ENCODE measurements at regions of chr3 and their contacts with region 1.

Region 1: DNA sequence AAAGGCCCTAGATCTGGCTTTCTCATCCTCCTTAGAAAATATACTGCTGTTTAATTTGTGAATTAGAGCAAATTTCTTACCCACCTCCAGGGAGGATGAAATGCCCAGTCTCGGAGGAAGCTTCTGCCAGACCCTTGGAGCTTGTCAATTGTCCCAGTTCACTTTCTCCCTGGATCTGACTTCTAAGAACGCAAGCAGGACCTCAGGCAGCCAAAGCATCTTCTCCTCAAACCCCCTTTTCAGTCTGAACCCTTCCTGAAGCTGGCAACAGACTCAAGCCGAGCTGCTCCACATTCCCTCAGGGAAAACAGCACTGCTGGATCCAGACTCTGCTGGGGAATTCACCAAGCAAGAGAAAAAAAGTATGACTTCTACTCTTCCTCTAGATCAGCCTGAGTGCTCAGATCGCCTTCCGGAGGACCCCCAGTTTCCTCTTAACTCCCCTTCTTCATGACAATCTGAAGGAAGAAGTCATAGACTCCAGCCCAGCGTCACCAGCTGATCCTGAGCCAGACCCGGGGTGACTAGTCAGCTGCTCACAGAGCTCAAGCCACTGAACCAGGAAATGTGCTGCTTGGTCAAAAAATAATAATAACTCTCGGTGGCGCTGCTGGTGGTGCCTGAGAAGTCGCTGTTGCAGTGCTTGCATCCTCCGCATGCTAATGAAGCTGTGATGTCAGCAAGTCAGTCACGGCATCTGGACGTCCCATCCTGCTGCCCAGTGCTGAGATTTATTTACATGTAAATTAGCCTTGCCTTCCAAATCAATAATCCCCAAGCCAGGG is at the start of gene PRICKLE2:
- DNase-seq: peak; percentile 70 to 94
- H3K4me3 ChIP-seq: peak within 1 kb of the TSS; percentile 48 to 66
- H3K27ac ChIP-seq: peak within 1 kb of the TSS; percentile 92
- H3K4me1 ChIP-seq: peaks cover 9 to 44% of the 10 kb centered on the region in 2 donors
- H3K27me3 ChIP-seq: no peaks in the 10 kb centered on the region
- CTCF ChIP-seq: peak; percentile 27 to 45 (median 34)
- total RNA-seq, gene PRICKLE2: 24.7 TPM

Region 2: DNA sequence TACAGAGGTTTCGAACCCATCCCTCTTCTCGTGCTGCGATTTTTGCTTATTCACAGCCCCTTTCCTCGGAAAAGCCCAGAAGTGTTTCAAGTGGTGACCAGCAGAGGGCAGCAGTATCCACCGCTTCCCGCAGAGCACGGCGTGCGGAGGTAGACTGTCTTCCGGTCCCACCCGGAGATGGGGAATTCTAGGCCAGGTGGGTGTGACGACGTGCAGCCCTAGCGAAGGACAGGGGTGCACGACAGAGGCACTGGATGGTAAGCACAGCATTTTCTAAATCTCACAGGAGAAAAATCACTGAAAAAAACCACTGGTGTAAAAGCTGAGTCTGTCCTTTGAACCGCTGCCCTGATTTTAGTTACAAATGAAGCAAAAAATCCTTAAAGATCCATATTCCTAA is 194.3 kb before region 1 on chr3:
- intact Hi-C with region 1: loop called (anchors 5 kb)
- DNase-seq: peak in 1 of 2 donors; percentile 76
- H3K4me3 ChIP-seq: peak overlapping the region; percentile 41 to 53
- H3K27ac ChIP-seq: no peak overlapping the region
- H3K4me1 ChIP-seq: no peaks in the 10 kb centered on the region
- H3K27me3 ChIP-seq: no peaks in the 10 kb centered on the region
- CTCF ChIP-seq: peak; percentile 86 to 91 (median 87)

Region 3: DNA sequence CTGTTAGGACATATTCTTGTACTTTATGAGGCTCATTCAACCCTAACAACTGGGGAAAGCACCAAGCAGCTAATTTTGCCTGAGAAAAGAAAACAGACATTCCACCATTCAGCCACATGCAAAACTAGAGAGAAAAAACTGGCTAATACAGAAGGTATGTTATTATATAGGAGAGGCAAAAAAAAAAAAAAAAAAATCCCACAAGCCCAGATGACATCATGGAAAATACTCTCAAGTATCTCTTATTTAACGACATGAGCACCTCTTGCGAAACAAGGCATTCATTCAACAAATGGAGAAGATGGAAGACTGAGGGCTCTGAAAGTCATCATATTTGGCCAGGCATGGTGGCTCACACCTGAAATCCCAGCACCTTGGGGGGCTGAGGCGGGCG is 61.3 kb before region 1 on chr3:
- intact Hi-C with region 1: loop called (anchors 5 kb)
- DNase-seq: no peak
- H3K4me3 ChIP-seq: no peak overlapping the region
- H3K27ac ChIP-seq: no peak overlapping the region
- H3K4me1 ChIP-seq: peaks cover 0 to 40% of the 10 kb centered on the region in 2 donors
- H3K27me3 ChIP-seq: no peaks in the 10 kb centered on the region
- CTCF ChIP-seq: no peak

Region 4: GRCh38 chr3:64187065-64187959 is 37.7 kb before region 1 on chr3:
- intact Hi-C with region 1: loop called (anchors 2 kb)
- DNase-seq: peak; percentile 35 to 80
- H3K4me3 ChIP-seq: no peak overlapping the region
- H3K27ac ChIP-seq: peak overlapping the region; percentile 50 to 76
- H3K4me1 ChIP-seq: peaks cover 10 to 43% of the 10 kb centered on the region in 2 donors
- H3K27me3 ChIP-seq: no peaks in the 10 kb centered on the region
- CTCF ChIP-seq: no peak

Region 5: GRCh38 chr3:64209866-64210621 is 15.0 kb before region 1 on chr3:
- intact Hi-C with region 1: loop called (anchors 1 kb)
- DNase-seq: peak; percentile 40 to 90
- H3K4me3 ChIP-seq: no peak overlapping the region
- H3K27ac ChIP-seq: peak overlapping the region; percentile 78 to 79
- H3K4me1 ChIP-seq: peaks cover 0 to 37% of the 10 kb centered on the region in 2 donors
- H3K27me3 ChIP-seq: no peaks in the 10 kb centered on the region
- CTCF ChIP-seq: no peak

Region 6: DNA sequence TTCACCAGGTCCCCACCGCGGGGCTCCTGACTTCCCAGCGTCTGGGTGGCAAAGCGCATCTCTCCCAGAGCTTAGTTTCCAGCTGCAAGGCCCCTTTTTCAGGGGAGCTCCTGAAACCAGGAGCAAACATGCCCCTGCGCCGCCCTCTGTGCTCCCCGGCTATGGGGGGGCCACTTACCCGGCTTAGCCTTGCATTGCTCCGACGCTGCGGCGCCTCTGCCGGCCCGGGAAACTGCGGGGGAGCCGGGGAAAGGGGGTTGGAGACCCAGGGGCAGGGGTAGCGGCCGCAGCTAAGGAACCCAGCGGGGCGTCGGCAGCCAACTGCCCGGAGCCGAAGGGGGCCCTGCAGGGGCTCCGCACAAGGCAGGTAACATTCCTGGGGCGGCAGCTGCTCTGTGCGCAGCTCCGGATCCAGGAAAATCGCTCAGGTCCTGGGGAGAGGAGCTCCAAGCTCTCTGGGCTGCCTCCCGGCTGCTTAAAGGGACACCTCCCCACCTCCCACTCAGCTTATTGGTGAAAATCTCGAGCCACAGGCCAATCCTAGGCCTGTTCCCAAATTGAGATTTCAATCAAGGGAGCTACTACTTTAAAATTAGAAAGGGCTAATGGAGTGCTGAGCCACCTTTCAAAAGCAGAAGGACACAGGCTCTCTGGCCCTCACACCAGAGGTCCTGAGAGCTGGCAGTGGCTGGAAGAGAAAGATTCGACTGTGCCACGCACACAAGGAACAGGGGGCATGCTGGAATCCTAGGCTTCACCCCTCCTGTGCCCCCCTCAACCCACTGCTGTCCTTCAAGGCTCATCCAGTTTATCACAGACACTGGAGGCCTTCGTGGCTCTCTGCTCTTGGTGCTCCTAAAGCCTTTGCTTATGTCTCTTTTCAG is 42.9 kb after region 1 on chr3:
- intact Hi-C with region 1: loop called (anchors 2 kb)
- DNase-seq: peak in 1 of 2 donors; percentile 86
- H3K4me3 ChIP-seq: peak overlapping the region; percentile 63 to 75
- H3K27ac ChIP-seq: peak overlapping the region; percentile 81 to 85
- H3K4me1 ChIP-seq: peaks cover 6 to 13% of the 10 kb centered on the region in 2 donors
- H3K27me3 ChIP-seq: no peaks in the 10 kb centered on the region
- CTCF ChIP-seq: peak in 1 of 3 experiments; percentile 4

Measured in ascending aorta (tissue), 2 donors.